ENCODE measurements at regions of chr2 and their contacts with region 1.

Region 1: DNA sequence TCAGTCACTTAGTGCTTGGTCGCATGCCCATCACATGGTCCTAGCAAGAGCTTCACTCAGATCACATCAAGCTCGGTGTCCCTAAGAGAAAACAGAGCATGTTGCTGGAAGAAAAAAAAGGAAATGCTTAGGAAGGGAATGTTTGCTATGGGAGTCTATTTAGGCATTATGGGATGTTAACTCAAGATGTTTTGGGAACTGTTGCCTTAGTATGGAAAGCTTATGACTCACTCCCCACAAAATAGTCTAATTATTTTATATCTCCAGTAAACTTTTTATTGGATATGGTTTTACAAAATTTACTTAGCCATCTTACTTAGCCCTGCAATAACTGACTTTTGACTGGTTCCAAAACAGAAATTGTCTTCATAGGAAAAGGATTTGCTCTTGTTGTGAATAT is 439.5 kb upstream of the ZEB2 start:
- DNase-seq: no peak
- ATAC-seq: no peak
- H3K4me3 ChIP-seq: no peak overlapping the region
- H3K27ac ChIP-seq: no peak overlapping the region
- H3K4me1 ChIP-seq: no peaks in the 10 kb centered on the region
- H3K27me3 ChIP-seq: no peaks in the 10 kb centered on the region

Region 2: DNA sequence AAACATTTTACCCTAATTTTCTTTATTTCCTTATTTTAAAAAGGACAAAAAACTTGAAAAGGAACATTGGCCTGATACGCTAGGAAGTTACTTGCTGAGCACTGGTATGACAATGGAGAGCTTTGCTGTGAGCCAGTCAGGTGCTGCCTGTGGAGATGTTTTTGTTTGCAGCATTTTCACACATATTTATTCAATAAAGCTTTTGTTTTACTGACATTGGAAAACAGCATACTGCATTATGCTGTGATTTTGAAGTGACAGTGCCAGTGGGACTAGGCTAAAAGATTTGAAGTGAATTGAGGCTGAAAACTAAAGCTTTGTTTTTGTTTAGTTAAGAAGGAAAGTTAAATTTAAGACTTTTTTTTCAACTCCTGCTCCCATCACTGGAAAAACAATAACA is 31.2 kb after region 1 on chr2:
- intact Hi-C with region 1: loop called in 1 of 2 experiments (anchors 5 kb)
- DNase-seq: no peak
- ATAC-seq: no peak
- H3K4me3 ChIP-seq: no peak overlapping the region
- H3K27ac ChIP-seq: no peak overlapping the region
- H3K4me1 ChIP-seq: no peaks in the 10 kb centered on the region
- H3K27me3 ChIP-seq: no peaks in the 10 kb centered on the region